ENCODE measurements at regions of chr17 and their contacts with region 1.

Region 1: DNA sequence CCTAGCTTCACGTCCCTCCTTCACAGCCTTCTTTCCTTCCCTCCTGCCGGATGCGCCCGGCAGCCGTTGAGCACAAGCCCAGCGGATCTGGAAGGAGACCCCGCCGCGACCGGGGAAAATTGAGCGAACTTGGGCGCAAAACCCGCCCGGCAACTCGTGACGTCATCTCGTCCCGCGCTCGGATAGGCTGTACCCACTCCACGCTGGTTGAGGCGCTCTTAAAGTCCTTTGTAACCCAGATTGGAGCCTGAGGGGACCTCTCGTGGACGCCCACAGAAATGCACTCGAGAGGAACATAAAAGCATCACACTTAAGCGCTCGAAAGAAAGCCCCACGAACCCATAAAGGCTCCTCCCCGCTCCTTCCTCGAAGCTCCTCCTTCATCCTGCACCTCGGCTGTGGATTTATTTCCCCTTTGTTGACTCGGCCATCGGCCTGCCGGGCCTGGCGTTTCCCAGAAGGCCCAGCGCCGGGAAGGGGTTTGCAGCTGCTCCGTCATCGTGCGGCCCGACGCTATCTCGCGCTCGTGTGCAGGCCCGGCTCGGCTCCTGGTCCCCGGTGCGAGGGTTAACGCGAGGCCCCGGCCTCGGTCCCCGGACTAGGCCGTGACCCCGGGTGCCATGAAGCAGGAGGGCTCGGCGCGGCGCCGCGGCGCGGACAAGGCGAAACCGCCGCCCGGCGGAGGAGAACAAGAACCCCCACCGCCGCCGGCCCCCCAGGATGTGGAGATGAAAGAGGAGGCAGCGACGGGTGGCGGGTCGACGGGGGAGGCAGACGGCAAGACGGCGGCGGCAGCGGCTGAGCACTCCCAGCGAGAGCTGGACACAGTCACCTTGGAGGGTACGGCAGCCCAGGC is at the start of gene PSMD3:
- DNase-seq: peak; percentile 100
- H3K4me3 Mint-ChIP-seq: peak within 1 kb of the TSS; percentile 77
- H3K27ac Mint-ChIP-seq: peak within 1 kb of the TSS; percentile 81
- H3K4me1 Mint-ChIP-seq: peaks cover 26% of the 10 kb centered on the region
- H3K27me3 Mint-ChIP-seq: peaks cover 43% of the 10 kb centered on the region
- CTCF ChIP-seq: no peak
- total RNA-seq, gene PSMD3: 2,152 and 2,179 TPM in 2 replicates

Region 2: GRCh38 chr17:39687811-39688518 is 292.6 kb before region 1 on chr17 and contains the start of gene PGAP3:
- CTCF ChIA-PET with region 1: interaction called, 8,195 read pairs
- intact Hi-C with region 1: loop called (anchors 1 kb)
- DNase-seq: peak; percentile 100
- H3K4me3 Mint-ChIP-seq: peak within 1 kb of the TSS; percentile 64
- H3K27ac Mint-ChIP-seq: peak within 1 kb of the TSS; percentile 63
- H3K4me1 Mint-ChIP-seq: peaks cover 27% of the 10 kb centered on the region
- H3K27me3 Mint-ChIP-seq: no peaks in the 10 kb centered on the region
- CTCF ChIP-seq: no peak
- total RNA-seq, gene PGAP3: 1,186 and 1,276 TPM in 2 replicates

Region 3: GRCh38 chr17:39769974-39770587 is 210.5 kb before region 1 on chr17:
- CTCF ChIA-PET with region 1: interaction called, 978 read pairs
- intact Hi-C with region 1: loop called (anchors 1 kb)
- DNase-seq: peak; percentile 100
- H3K4me3 Mint-ChIP-seq: peak overlapping the region; percentile 10
- H3K27ac Mint-ChIP-seq: peak overlapping the region; percentile 60
- H3K4me1 Mint-ChIP-seq: peaks cover 72% of the 10 kb centered on the region
- H3K27me3 Mint-ChIP-seq: peaks cover 13% of the 10 kb centered on the region
- CTCF ChIP-seq: no peak

Region 4: DNA sequence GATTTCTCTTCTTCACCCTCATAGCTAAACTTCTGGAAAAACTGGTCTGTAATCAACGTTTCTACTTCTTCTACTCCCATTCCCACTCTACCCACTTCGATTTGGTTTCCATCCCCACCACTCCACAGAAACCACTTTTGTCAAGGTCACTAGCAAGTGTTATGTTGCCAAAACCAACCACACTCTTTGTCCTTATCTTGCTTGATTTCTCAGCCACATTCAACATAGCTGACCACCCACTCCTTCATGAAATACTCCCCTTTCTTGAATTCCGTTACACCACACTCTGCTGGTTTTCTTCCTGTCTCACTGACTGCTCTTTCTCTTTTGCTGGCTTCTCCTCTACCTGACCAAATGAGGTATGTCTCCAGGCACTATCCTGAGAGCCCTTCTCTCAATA is 128.3 kb before region 1 on chr17:
- CTCF ChIA-PET with region 1: interaction called, 1,809 read pairs
- intact Hi-C with region 1: no loop called
- DNase-seq: peak; percentile 59
- H3K4me3 Mint-ChIP-seq: no peak overlapping the region
- H3K27ac Mint-ChIP-seq: no peak overlapping the region
- H3K4me1 Mint-ChIP-seq: peaks cover 10% of the 10 kb centered on the region
- H3K27me3 Mint-ChIP-seq: no peaks in the 10 kb centered on the region
- CTCF ChIP-seq: no peak

Region 5: DNA sequence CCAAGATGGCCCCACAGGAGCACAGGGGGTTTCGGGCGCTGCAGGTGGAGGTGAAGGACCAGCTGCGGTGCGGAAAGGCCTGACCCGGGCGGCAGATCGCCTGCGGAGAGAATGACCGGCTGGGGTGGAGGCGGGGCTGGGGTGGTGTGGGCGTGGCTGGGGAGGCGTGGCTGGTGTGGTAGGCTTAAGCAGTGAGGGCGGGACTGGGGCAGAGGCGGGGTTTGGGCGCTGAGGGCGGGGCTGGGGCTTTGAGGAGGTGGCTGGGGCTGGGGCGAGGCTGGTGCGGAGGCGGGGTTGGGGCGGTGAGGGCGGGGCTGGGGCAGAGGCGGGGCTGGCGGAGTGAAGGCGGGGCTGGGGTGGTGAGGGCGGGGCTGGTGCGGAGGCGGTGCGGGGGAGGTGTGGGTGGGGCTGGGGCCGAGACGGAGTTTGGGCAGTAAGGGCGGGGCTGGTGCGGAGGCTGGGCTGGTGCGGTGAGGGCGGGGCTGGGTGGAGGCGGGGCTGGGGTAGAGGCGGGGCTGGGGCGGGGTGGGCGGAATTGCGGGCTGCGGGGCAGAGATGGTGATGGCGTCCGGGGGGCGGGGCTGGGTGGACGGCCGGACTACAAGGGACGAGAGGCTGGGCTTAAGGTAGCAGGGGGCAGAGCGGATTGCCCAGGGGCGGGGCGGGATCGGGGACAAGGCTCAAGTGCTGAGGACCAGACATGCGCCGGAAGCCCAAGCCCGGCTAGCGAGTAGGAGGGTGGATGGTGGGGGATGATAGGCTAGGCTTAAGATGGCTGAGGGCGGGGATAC is 27.7 kb before region 1 on chr17:
- CTCF ChIA-PET with region 1: interaction called, 4,038 read pairs
- intact Hi-C with region 1: loop called (anchors 1 kb)
- DNase-seq: peak; percentile 100
- H3K4me3 Mint-ChIP-seq: peak overlapping the region; percentile 58
- H3K27ac Mint-ChIP-seq: peak overlapping the region; percentile 18
- H3K4me1 Mint-ChIP-seq: peaks cover 42% of the 10 kb centered on the region
- H3K27me3 Mint-ChIP-seq: peaks cover 15% of the 10 kb centered on the region
- CTCF ChIP-seq: no peak

Region 6: DNA sequence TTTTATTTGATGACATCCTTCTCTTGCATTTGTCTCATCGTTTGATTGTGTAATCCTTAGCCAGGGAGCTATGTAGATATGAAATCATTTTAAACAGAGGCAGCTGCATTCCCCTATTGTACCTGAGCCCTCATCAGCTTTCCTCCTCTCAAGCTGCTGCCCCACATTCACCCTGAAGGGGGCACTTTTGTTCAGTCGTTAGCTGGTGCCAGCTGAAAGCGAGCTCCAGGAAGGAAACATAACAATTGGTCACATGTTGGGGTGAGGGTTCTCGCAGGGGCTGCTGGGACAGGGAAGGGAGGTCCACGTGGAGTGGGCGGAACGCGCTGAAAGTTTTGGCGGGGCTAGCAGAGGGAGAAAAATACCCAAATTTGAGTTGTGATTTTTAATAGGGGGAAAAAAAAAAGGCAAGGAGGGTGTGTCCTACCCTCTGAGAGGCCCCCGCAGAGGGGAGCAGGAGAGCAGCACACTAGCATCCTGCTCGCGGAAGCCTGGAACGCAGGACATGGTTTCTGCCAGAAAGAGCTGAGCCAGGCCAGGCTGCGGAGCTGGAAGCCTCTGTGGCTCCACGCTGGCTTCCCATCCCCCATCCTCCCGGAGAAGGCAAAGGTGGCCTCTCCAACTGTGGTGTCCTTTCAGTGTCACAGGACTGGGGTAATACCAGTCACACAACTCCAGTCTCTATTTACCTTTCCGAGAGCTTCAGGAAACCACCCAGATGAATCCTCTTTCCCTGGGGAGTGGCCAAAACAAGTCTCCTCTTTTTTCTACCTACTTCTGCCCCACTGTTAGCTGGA is 132.7 kb after region 1 on chr17:
- CTCF ChIA-PET with region 1: interaction called, 27 read pairs
- intact Hi-C with region 1: loop called (anchors 1 kb)
- DNase-seq: peak; percentile 100
- H3K4me3 Mint-ChIP-seq: peak overlapping the region; percentile 65
- H3K27ac Mint-ChIP-seq: peak overlapping the region; percentile 74
- H3K4me1 Mint-ChIP-seq: peaks cover 58% of the 10 kb centered on the region
- H3K27me3 Mint-ChIP-seq: no peaks in the 10 kb centered on the region
- CTCF ChIP-seq: no peak

Region 7: DNA sequence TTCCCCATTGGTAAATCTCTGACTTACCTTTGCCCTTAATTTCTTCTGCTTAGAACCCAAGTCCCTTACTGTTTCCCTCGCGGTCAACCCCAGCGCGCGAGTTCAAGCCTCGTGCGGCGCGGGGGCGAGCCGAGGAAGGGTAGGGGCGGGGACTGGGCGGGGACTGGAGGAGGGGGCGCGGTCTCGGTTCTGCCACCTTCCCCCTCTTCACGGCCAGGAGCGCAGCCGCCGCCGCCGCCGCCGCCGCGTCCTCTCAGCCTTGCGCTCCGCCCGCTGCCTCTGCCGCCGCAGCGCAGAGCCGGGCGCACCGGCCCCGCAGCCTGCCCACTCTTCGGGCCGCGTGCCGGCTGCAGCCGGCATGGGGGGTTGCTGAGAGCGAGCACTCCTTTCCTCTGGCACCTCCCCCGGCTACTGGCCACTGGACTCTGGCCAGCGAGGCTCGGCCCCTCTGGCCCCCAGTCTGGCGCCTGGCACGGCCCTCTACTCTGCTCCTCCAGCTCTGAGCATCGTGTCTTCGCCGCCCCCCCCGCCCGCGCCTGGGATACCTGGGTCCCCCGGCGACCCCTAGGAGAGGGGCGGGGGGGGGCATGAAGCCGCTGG is 196.8 kb after region 1 on chr17 and contains the start of gene RAPGEFL1:
- CTCF ChIA-PET with region 1: no interaction called
- intact Hi-C with region 1: no loop called
- DNase-seq: peak; percentile 100
- H3K4me3 Mint-ChIP-seq: peak within 1 kb of the TSS; percentile 76
- H3K27ac Mint-ChIP-seq: peak within 1 kb of the TSS; percentile 61
- H3K4me1 Mint-ChIP-seq: peaks cover 51% of the 10 kb centered on the region
- H3K27me3 Mint-ChIP-seq: no peaks in the 10 kb centered on the region
- CTCF ChIP-seq: no peak
- total RNA-seq, gene RAPGEFL1: 57.9 and 86.3 TPM in 2 replicates

Region 8: DNA sequence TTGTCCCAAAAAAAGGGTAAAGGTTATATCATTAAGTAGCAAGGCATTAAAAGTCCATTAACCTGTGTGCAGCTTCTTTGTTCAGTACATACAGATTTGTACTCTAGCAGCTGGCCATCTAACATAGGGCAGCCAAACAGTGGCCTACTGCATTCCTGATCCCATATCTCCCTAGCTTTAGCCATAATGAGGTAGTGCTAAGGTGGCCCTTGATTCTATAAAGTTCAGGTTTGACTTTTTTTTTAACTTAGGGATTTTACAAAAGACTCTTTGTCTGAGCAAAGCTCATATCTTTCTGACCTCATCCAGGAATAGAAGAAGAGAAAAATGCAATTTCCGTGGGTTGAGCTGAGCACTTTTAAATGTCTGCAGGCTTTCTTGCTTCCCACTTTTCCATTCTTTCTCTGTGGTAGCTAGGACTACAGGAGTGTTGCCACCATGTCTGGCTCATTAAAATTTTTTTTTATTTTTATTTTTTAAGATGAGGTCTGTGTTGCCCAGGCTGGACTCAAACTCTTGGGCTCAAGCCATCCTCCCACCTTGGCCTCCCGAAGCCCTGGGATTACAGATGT is 287.6 kb after region 1 on chr17:
- CTCF ChIA-PET with region 1: no interaction called
- intact Hi-C with region 1: no loop called
- DNase-seq: peak; percentile 69
- H3K4me3 Mint-ChIP-seq: no peak overlapping the region
- H3K27ac Mint-ChIP-seq: no peak overlapping the region
- H3K4me1 Mint-ChIP-seq: no peaks in the 10 kb centered on the region
- H3K27me3 Mint-ChIP-seq: no peaks in the 10 kb centered on the region
- CTCF ChIP-seq: no peak

Region 9: GRCh38 chr17:40474419-40475002 is 493.9 kb after region 1 on chr17:
- CTCF ChIA-PET with region 1: interaction called, 54 read pairs
- intact Hi-C with region 1: no loop called
- DNase-seq: no peak
- H3K4me3 Mint-ChIP-seq: no peak overlapping the region
- H3K27ac Mint-ChIP-seq: no peak overlapping the region
- H3K4me1 Mint-ChIP-seq: no peaks in the 10 kb centered on the region
- H3K27me3 Mint-ChIP-seq: peaks cover 65% of the 10 kb centered on the region
- CTCF ChIP-seq: no peak